ENCODE measurements at regions of chr1 and their contacts with region 1.

Region 1: GRCh38 chr1:183471743-183472487 is 384 bp upstream of the SMG7 start:
- DNase-seq: peak; percentile 96 to 99
- H3K4me3 ChIP-seq: peak overlapping the region; percentile 87
- H3K4me3 Mint-ChIP-seq: peak overlapping the region; percentile 97
- H3K27ac Mint-ChIP-seq: peak overlapping the region; percentile 100
- H3K4me1 ChIP-seq: peaks cover 17% of the 10 kb centered on the region; the same call in 1 of the 2 replicates
- H3K4me1 Mint-ChIP-seq: peaks cover 13% of the 10 kb centered on the region
- H3K27me3 ChIP-seq: no peaks in the 10 kb centered on the region
- H3K27me3 Mint-ChIP-seq: no peaks in the 10 kb centered on the region
- CTCF ChIP-seq: peak in 1 of 2 experiments; percentile 20

Region 2: GRCh38 chr1:183281553-183282091 is 190.3 kb before region 1 on chr1:
- CTCF ChIA-PET with region 1: no interaction called
- POLR2A ChIA-PET with region 1: no interaction called
- intact Hi-C with region 1: loop called (anchors 2 kb)
- DNase-seq: peak; percentile 88 to 89
- H3K4me3 ChIP-seq: no peak overlapping the region
- H3K4me3 Mint-ChIP-seq: peak overlapping the region; percentile 49
- H3K27ac Mint-ChIP-seq: peak overlapping the region; percentile 88
- H3K4me1 ChIP-seq: peaks cover 48% of the 10 kb centered on the region
- H3K4me1 Mint-ChIP-seq: peaks cover 31% of the 10 kb centered on the region
- H3K27me3 ChIP-seq: no peaks in the 10 kb centered on the region
- H3K27me3 Mint-ChIP-seq: no peaks in the 10 kb centered on the region
- CTCF ChIP-seq: peak; percentile 80 to 88

Region 3: DNA sequence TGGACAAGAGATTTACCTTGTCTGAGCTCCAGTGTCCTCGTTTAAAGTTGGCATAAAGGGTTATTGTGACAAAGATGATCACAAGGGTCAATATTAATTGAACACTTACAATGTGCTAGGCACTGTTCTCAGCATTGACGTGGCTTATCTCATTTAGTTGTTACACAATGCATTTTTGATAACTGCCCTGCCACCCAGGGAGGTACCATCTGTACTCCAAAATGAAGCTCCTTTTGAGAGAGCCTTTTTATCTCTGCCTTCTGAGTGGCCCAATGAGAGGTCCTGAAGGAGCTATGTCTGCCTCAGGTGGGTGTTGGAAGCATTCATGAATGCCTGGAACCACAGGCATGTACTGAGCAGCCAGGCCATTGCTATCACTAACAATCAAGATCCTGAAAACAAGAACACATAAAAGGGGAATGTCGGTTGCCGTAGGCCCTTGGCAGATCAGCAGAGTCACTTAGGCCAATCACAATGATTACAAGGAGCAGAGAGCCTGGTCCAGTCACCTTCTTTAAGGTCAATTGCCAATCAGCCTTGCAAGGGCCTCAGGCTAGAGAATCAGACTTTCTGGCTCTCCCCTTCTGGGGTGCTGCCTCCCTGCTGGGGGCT is 132.3 kb before region 1 on chr1:
- CTCF ChIA-PET with region 1: no interaction called
- POLR2A ChIA-PET with region 1: no interaction called
- intact Hi-C with region 1: no loop called
- DNase-seq: no peak
- H3K4me3 ChIP-seq: no peak overlapping the region
- H3K4me3 Mint-ChIP-seq: no peak overlapping the region
- H3K27ac Mint-ChIP-seq: no peak overlapping the region
- H3K4me1 ChIP-seq: no peaks in the 10 kb centered on the region
- H3K4me1 Mint-ChIP-seq: no peaks in the 10 kb centered on the region
- H3K27me3 ChIP-seq: no peaks in the 10 kb centered on the region
- H3K27me3 Mint-ChIP-seq: no peaks in the 10 kb centered on the region
- CTCF ChIP-seq: no peak

Region 4: GRCh38 chr1:183424691-183425090 is 47.2 kb before region 1 on chr1:
- CTCF ChIA-PET with region 1: no interaction called
- POLR2A ChIA-PET with region 1: no interaction called
- intact Hi-C with region 1: loop called (anchors 5 kb)
- DNase-seq: no peak
- H3K4me3 ChIP-seq: no peak overlapping the region
- H3K4me3 Mint-ChIP-seq: no peak overlapping the region
- H3K27ac Mint-ChIP-seq: no peak overlapping the region
- H3K4me1 ChIP-seq: peaks cover 25% of the 10 kb centered on the region
- H3K4me1 Mint-ChIP-seq: peaks cover 28% of the 10 kb centered on the region
- H3K27me3 ChIP-seq: no peaks in the 10 kb centered on the region
- H3K27me3 Mint-ChIP-seq: no peaks in the 10 kb centered on the region
- CTCF ChIP-seq: no peak

Region 5: DNA sequence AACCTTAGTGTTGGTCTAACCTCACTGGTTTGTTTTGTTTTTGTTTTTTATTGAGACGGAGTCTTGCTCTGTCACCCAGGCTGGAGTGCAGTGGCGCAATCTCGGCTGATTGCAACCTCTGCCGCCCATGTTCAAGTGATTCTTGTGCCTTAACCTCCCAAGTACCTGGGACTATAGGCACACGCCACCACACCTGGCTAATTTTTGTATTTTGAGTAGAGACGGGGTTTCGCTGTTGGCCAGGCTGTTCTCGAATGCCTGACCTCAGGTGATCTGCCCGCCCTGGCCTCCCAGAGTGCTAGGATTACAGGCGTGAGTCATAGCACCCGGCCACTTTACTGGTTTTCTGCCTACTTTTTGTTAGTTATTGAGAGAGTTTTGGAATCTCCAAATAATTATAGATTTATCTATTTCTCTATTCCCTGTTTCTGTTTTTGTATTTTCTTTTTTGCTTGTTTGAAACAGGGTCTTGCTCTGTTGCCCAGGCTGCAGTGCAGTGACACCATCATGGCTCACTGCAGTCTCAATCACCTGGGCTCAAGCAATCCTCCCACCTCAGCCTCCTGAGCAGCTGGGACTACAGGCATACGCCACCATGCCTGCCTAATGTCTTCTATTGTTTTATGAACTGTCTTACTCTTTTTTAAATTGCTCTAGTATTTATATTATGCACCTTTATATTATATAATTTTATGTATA is 21.8 kb after region 1 on chr1:
- CTCF ChIA-PET with region 1: no interaction called
- POLR2A ChIA-PET with region 1: no interaction called
- intact Hi-C with region 1: no loop called
- DNase-seq: no peak
- H3K4me3 ChIP-seq: no peak overlapping the region
- H3K4me3 Mint-ChIP-seq: no peak overlapping the region
- H3K27ac Mint-ChIP-seq: peak overlapping the region; percentile 48
- H3K4me1 ChIP-seq: no peaks in the 10 kb centered on the region
- H3K4me1 Mint-ChIP-seq: peaks cover 6% of the 10 kb centered on the region
- H3K27me3 ChIP-seq: no peaks in the 10 kb centered on the region
- H3K27me3 Mint-ChIP-seq: no peaks in the 10 kb centered on the region
- CTCF ChIP-seq: no peak

Region 6: GRCh38 chr1:183543619-183544204 is 71.8 kb after region 1 on chr1:
- CTCF ChIA-PET with region 1: no interaction called
- POLR2A ChIA-PET with region 1: no interaction called
- intact Hi-C with region 1: loop called (anchors 1 kb)
- DNase-seq: peak in 1 of 2 experiments; percentile 62
- H3K4me3 ChIP-seq: no peak overlapping the region
- H3K4me3 Mint-ChIP-seq: no peak overlapping the region
- H3K27ac Mint-ChIP-seq: no peak overlapping the region
- H3K4me1 ChIP-seq: peaks cover 6% of the 10 kb centered on the region; the same call in 1 of the 2 replicates
- H3K4me1 Mint-ChIP-seq: peaks cover 13% of the 10 kb centered on the region
- H3K27me3 ChIP-seq: no peaks in the 10 kb centered on the region
- H3K27me3 Mint-ChIP-seq: no peaks in the 10 kb centered on the region
- CTCF ChIP-seq: peak; percentile 57 to 80

Measured in Caco-2 (cell line).